ENCODE measurements at regions of chr11 and their contacts with region 1.

Region 1: GRCh38 chr11:78645226-78646202 is 70.8 kb upstream of the NARS2 start:
- DNase-seq: peak; percentile 71 to 84 (median 78)
- ATAC-seq: peak; percentile 81
- H3K4me3 ChIP-seq: no peak overlapping the region
- H3K27ac ChIP-seq: no peak overlapping the region
- H3K4me1 ChIP-seq: no peaks in the 10 kb centered on the region
- H3K27me3 ChIP-seq: no peaks in the 10 kb centered on the region
- CTCF ChIP-seq: peak; percentile 72 to 96 (median 93)
- POLR2A ChIP-seq: no peak

Region 2: GRCh38 chr11:78759071-78759470 is 113.6 kb after region 1 on chr11:
- intact Hi-C with region 1: no loop called
- DNase-seq: no peak
- ATAC-seq: no peak
- H3K4me3 ChIP-seq: no peak overlapping the region
- H3K27ac ChIP-seq: no peak overlapping the region
- H3K4me1 ChIP-seq: no peaks in the 10 kb centered on the region
- H3K27me3 ChIP-seq: no peaks in the 10 kb centered on the region
- CTCF ChIP-seq: no peak
- POLR2A ChIP-seq: no peak

Region 3: GRCh38 chr11:79493555-79494171 is 848.1 kb after region 1 on chr11:
- intact Hi-C with region 1: loop called (anchors 10 kb)
- DNase-seq: peak; percentile 66 to 73 (median 66)
- ATAC-seq: peak; percentile 53
- H3K4me3 ChIP-seq: no peak overlapping the region
- H3K27ac ChIP-seq: no peak overlapping the region
- H3K4me1 ChIP-seq: no peaks in the 10 kb centered on the region
- H3K27me3 ChIP-seq: no peaks in the 10 kb centered on the region
- CTCF ChIP-seq: peak; percentile 58 to 79 (median 68)
- POLR2A ChIP-seq: no peak

Measured in body of pancreas (tissue), 4 donors.